Posterior cingulate gyrus (tissue), 11 donors: ENCODE measurements at regions of chr11 and their contacts with region 1.

Region 1: DNA sequence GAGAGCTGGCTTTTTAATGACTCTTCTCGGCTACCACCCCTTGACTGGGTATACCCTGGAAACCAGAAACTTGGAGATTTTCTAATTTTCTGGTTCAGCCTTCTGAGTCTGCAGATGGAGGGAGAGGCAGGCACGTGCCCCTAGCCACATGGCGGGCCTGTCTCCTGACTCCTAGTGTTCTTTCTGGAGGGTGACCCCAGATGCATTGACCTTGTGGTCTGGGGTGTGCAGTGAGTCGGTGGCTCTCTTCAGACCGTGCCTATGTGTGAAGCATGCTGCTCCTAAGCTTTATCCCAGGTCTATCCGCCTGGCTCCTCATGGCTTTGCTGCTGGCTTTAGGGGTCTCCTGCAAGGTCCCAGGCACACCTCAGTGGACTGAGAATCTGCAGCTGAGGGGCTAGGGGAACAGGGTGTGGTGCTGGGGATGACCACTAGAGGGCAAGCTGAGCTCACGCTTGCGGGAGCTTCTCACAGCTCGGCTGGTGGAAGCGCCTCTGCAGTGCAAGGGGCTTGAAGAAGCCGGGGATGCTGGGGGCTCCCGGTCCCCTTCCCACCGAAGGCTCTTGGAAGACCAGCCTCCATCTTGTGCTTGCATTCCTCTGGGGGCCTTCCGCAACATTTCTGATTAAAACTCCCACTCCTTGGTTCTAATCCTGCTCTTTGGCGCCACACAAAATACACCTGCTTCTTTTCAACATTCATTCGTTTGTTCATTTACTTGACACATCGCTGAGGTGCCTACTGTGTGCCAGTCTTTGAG is 51.8 kb downstream of the OTOG start:
- DNase-seq: peak; percentile 71 to 96 (median 86)

Region 2: GRCh38 chr11:17489751-17490150 is 109.1 kb before region 1 on chr11:
- intact Hi-C with region 1: no loop called
- DNase-seq: peak in 1 of 10 donors; percentile 20

Region 3: DNA sequence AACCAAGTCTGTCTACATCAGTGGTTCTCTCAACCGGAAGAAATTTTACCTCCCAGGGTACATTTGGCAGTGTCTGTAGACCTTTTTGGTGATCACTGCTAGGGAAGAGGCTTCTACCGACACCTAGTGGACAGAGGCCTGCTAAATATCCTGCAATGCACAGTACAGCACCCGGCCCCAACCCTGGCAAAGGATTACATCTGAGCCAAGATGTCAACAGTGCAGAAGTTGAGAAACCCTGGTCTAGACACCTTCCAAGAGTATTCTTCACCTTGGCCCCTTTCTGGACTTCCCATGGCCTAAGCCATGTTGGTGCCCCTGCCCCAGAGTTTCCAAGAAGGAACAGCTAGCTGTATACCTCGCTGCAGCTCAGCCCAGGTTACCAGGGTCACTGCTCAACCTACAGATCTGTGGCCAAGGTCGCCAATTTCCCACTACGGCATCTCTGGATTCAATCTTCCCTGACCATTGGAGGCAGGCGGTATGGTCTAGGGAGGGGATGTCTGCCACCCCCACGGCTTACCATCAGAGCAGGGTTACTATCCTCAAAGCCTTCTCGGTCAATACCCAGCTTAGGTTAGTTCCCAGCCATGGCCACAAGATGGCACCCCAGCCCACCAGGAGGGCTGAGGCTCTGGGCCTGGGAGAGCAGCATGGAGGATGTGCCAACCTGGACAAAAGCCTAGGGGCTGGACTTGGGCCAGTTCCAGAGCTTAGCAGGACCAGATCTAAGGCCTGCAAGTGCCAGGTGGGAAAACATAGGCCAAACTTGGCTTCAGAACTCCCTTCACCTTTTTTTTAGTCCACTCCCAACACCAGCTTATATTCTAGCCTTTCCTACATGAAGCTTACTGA is 132.0 kb after region 1 on chr11:
- intact Hi-C with region 1: loop called (anchors 2 kb)
- DNase-seq: peak; percentile 78 to 98 (median 89)